ENCODE measurements at regions of chr9 and their contacts with region 1.

Region 1: GRCh38 chr9:129139993-129140396 is 28.8 kb downstream of the PTPA start:
- DNase-seq: peak; percentile 99
- H3K4me3 ChIP-seq: peak overlapping the region; percentile 17 to 39 (median 32)
- H3K27ac ChIP-seq: peak overlapping the region; percentile 98
- H3K4me1 ChIP-seq: peaks cover 52% of the 10 kb centered on the region
- H3K27me3 ChIP-seq: no peaks in the 10 kb centered on the region
- CTCF ChIP-seq: no peak

Region 2: GRCh38 chr9:128863647-128864046 is 276.3 kb before region 1 on chr9:
- CTCF ChIA-PET with region 1: no interaction called
- dilution Hi-C with region 1: no loop called
- in situ Hi-C with region 1: no loop called
- intact Hi-C with region 1: loop called (anchors 10 kb)
- DNase-seq: peak; percentile 48
- H3K4me3 ChIP-seq: no peak overlapping the region
- H3K27ac ChIP-seq: no peak overlapping the region
- H3K4me1 ChIP-seq: peaks cover 11% of the 10 kb centered on the region
- H3K27me3 ChIP-seq: no peaks in the 10 kb centered on the region
- CTCF ChIP-seq: peak; percentile 75 to 97

Region 3: DNA sequence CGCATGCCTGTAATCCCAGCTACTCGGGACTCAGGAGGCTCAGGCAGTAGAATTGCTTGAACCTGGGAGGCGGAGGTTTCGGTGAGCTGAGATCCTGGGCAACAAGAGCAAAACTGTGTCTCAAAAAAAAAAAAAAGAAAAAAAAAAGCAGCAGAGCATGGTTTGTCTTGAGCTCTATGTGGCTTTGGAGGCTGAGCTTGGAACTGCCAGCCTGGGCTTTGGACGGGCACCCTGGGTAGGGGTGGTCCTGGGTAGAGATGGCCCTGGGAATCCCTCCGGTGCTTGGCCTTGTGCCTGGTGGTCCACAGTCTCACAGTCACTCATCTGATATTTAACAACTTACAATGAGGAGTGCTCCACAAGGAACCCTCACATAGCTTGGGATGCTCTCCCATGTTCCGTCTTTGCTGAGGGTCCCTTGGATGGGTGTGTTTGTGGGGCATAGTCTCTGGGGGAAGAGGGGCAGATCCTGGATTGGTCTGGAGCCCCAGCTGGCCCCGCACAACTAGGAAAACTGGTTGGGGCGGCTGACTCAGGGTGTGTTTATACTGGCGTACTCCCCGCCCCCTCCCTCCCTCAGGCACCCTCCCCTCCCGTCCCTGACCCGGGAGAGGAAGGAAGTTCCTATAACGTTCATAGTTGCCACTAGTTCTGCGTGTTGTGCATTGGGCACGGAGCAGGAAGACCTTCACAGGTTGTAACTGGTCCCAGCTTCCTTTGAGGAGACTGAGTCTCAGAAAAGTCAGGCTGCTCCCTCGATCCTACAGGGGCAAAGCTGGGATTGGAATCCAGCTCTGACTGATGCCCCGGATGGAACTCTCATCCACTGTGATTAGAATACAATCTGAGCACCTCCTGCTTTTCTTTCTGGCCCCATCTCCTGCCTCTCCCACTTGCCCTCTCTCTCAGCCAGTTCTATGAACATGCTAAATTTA is 26.9 kb after region 1 on chr9:
- CTCF ChIA-PET with region 1: interaction called, 3 read pairs
- dilution Hi-C with region 1: no loop called
- in situ Hi-C with region 1: no loop called
- intact Hi-C with region 1: loop called (anchors 1 kb)
- DNase-seq: peak; percentile 89
- H3K4me3 ChIP-seq: peak overlapping the region; percentile 1 to 41 (median 34)
- H3K27ac ChIP-seq: peak overlapping the region; percentile 66
- H3K4me1 ChIP-seq: peaks cover 40% of the 10 kb centered on the region
- H3K27me3 ChIP-seq: no peaks in the 10 kb centered on the region
- CTCF ChIP-seq: no peak

Region 4: DNA sequence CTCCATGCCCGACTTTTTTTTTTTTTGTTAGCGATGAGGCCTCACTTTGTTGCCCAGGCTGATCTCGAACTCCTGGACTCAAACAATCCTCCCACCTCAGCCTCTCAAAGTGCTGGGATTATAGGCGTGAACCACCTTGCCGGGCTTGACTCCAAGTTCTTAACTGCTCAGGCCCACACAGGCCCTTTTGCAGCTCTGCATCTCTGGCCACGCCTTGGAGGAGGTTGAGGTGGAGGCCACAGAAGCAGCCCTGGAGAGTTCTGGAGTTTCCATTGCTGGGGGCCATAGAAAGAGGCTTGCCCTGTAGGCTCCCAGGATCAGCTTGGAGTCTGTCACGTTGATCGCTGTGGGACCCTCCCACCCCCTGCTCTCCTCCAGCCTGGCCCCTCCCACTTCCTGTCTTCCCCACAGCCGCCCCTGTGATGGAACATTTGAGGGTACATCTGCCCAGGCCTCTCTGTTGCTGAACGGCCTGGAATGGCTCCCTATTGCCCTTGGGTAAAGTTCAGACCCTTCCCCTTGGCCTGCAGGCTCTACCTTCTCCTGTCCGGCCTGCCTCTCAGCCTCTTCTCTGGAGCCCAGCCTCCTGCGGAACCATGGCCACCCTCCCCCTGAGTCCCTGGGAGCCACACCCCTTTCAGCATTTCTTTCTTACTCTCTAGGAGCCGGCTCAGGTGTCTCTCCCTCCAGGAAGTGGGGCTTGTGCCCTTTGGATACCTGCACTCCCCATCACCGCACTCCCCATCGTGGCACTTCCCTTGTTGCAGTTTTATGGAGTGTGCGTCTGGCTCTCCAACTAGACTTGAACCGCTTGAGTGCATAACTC is 68.4 kb after region 1 on chr9:
- CTCF ChIA-PET with region 1: no interaction called
- dilution Hi-C with region 1: no loop called
- in situ Hi-C with region 1: no loop called
- intact Hi-C with region 1: no loop called
- DNase-seq: peak; percentile 40
- H3K4me3 ChIP-seq: no peak overlapping the region
- H3K27ac ChIP-seq: no peak overlapping the region
- H3K4me1 ChIP-seq: peaks cover 3% of the 10 kb centered on the region
- H3K27me3 ChIP-seq: no peaks in the 10 kb centered on the region
- CTCF ChIP-seq: no peak

Region 5: DNA sequence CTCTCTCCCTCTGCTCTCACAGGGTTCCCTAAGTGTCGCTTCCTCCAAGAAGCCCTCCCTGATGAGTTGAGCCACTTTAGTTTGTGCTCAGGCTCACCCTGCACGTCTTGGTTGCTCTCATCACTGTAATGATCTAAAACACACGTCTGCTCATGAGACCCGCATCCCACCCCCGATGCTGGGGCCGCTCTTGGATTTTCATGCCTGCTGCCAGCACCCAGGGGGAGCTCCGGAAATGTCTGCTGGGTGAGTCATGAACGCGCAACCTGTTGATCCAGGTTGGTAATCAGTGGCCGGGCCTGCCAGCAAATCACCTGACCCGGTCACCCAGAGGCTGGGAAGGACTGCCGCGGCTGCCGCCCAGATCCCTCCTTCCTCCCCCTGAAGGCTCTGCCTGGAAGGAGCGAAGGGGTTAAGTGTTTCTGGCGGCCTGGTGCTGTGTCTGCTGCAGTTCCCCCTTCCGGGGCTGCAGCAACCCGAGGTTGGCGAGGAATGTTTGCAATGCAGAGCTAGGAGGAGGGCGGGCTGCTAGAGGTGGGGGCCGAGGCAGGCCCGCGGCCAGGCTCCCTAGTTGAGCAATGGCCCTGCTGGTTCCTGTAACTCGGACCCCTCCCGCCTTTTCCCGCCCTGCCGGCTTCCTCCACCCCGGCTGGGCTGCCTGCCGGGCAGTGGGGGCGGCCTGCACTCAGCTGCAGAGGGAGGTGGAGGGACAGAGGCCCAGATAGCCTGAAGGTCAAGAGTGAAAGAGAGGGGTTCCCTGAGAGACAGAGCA is 194.1 kb after region 1 on chr9:
- CTCF ChIA-PET with region 1: no interaction called
- dilution Hi-C with region 1: no loop called
- in situ Hi-C with region 1: no loop called
- intact Hi-C with region 1: loop called (anchors 1 kb)
- DNase-seq: peak; percentile 97
- H3K4me3 ChIP-seq: peak overlapping the region; percentile 31 to 41 (median 37)
- H3K27ac ChIP-seq: peak overlapping the region; percentile 88
- H3K4me1 ChIP-seq: peaks cover 48% of the 10 kb centered on the region
- H3K27me3 ChIP-seq: no peaks in the 10 kb centered on the region
- CTCF ChIP-seq: no peak

Region 6: GRCh38 chr9:129383561-129384416 is 243.8 kb after region 1 on chr9:
- CTCF ChIA-PET with region 1: no interaction called
- dilution Hi-C with region 1: no loop called
- in situ Hi-C with region 1: no loop called
- intact Hi-C with region 1: loop called (anchors 1 kb)
- DNase-seq: peak; percentile 73
- H3K4me3 ChIP-seq: peak overlapping the region; percentile 37 to 58 (median 45)
- H3K27ac ChIP-seq: no peak overlapping the region
- H3K4me1 ChIP-seq: peaks cover 16% of the 10 kb centered on the region
- H3K27me3 ChIP-seq: no peaks in the 10 kb centered on the region
- CTCF ChIP-seq: peak in 1 of 2 donors; percentile 31

Region 7: DNA sequence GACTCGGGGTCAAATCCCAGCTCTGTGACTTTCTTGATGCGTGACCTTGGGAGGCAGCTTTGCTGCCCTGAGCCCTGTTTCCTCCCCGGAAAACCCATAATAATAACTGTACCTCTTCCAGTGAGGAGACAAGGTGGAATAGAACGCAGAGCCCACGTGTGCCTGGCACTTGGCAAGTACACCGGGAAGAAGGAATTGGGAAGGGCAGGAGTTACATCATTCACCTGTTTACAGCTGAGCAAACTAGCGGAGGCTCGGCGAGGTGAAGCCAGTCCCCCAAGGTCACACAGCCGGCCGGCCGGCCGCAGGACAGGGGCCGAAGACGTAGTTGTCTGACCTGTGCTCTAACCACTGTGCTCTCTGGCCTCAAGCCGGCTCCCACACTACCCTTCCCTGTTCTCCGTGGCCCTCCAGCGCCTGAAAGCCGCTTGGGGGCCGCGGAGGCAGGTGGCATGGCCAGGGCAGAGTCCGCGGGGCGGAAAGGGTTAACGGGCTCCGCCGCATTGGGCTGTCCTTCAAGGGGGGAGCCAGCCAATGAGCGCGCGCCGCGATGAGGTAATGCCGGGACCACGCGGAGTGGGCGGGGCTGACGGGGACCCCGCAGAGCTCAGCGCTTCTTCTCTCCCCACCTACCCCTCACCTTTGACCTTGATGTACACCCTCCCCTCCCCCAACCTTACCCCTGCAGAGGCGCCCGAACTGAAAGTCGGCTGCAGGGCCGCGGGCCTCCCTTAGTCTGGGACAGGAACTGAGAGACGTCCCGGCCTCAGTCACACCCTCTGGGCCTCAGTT is 355.7 kb after region 1 on chr9:
- CTCF ChIA-PET with region 1: no interaction called
- dilution Hi-C with region 1: no loop called
- in situ Hi-C with region 1: loop called in 1 of 2 experiments (anchors 25 kb)
- intact Hi-C with region 1: loop called (anchors 2 kb)
- DNase-seq: peak; percentile 63
- H3K4me3 ChIP-seq: peak overlapping the region; percentile 51 to 61 (median 51)
- H3K27ac ChIP-seq: peak overlapping the region; percentile 45
- H3K4me1 ChIP-seq: peaks cover 16% of the 10 kb centered on the region
- H3K27me3 ChIP-seq: no peaks in the 10 kb centered on the region
- CTCF ChIP-seq: no peak

Region 8: DNA sequence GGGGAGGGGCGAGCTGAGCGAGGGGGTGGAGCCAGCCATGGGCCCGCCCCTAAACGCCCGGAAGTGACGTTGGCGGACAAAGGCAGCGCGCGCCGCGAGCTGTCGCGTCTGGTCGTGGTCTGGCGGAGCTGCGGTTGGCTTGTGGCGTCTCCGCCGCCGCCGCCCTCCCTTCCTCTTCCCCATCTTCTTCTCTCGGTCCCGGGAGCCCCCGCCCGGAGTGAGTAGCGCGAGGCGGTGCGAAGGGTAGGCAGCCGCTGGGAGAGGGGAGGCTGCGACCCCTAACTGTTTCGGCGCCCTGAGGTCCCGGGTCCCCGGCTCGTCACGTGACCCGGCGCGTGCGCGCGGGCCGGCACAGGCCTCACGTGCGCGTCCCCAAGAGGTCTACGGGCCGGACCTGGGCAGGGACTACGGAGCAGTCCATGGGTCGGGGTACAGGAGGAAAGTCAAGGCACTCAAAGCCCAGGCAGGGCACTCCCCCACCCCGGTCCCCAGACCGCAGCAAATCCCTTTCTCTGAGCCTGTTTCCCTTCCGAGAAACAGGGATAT is 486.2 kb after region 1 on chr9 and contains the start of gene NTMT1:
- CTCF ChIA-PET with region 1: interaction called, 11 read pairs
- dilution Hi-C with region 1: no loop called
- in situ Hi-C with region 1: loop called in 1 of 2 experiments (anchors 5 kb)
- intact Hi-C with region 1: no loop called
- DNase-seq: peak; percentile 75
- H3K4me3 ChIP-seq: peak within 1 kb of the TSS; percentile 49 to 100 (median 76)
- H3K27ac ChIP-seq: peak within 1 kb of the TSS; percentile 67
- H3K4me1 ChIP-seq: peaks cover 19% of the 10 kb centered on the region
- H3K27me3 ChIP-seq: no peaks in the 10 kb centered on the region
- CTCF ChIP-seq: no peak
- total RNA-seq, gene NTMT1: 15.0 to 44.6 TPM

Measured in mammary epithelial cell (primary cell).